Left colon (tissue), 2 donors: ENCODE measurements at regions of chr2 and their contacts with region 1.

Region 1: GRCh38 chr2:217521820-217522219 is 481.0 kb downstream of the TNS1 start:
- DNase-seq: no peak
- ATAC-seq: no peak

Region 2: GRCh38 chr2:217248312-217248935 is 273.4 kb before region 1 on chr2:
- intact Hi-C with region 1: no loop called
- DNase-seq: peak; percentile 48 to 74
- ATAC-seq: peak; percentile 25

Region 3: DNA sequence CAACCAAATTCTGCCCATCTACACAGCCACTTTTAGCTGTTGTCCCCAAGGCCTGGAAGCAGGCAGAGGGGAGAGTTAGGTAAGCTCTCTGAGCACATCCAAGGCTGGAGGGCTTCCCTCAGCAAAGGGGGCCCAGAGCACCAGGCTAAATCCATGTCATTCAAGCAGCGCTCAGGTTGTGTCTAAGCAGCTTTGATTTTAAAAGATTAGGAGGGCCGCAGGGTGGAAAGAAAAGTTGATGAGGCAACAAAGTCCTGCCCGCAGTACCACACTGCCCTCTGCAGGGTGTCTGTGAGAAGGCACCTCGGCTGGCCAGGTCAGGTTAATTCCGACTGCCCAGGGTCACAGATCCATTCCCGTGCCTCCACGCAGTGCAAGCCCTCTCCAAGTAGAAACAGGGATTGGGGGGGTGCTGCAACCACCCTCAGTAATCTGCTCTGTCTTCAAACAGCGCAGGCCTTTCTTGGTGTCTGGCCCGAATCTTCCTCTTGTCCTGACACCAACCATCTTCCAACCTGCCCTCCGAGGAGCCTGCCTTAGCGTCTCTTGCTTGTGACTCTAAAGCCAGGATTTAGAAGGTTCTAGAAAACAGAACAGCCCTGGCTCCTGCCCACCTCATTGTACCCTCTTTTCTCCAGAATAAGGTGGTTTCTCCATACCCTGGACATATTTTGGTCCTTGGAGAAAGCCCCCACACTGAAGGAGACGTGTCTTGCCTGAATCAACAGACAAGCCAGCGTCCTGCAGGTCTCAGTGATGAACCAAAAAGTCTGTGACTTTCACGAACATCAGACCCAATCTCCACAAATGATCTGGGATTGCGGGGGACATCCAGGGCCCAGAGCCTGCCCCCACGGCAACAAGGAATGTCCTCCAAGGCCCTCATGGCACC is 191.8 kb after region 1 on chr2:
- intact Hi-C with region 1: loop called in 1 of 2 experiments (anchors 10 kb)
- DNase-seq: peak; percentile 51 to 72
- ATAC-seq: peak; percentile 70